Pancreas (tissue), 10 donors: ENCODE measurements at regions of chr19 and their contacts with region 1.

Region 1: DNA sequence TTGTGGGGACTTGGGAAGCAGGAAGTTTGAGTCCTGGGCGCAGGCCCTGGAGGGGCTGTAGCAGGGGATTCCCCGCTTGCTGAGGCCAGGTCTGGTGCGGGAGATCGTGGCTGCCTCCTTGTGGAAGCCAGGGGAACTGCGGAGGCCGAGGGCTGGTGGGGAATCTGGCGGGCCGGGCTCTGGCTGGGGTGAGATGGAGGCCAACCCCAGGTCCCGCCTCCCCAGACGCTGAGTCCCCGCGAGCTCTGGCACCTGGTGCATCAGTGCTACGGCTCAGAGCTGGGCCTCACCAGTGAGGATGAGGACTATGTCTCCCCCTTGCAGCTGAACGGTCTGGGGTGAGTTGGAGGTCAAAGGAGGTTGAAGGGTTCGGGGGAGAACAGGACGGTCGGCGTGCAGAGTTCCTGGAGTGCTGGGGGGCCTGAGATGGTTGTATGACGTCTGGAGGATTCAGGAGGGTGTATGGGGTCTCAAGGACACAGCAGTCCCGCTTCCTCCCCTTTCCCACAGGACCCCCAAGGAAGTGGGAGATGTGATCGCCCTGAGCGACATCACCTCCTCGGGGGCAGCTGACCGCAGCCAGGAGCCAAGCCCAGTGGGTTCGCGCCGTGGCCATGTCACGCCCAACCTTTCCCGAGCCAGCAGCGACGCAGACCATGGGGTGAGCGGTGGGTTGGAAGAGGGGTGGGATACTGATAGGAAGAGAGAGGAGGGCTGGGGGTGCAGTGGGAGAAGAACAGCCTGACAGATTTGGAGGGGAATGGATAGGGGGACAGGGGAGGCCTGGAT is 13.1 kb downstream of the GRAMD1A start:
- DNase-seq: peak; percentile 61 to 90 (median 78)
- ATAC-seq: peak; percentile 67 to 90 (median 85)
- H3K4me3 ChIP-seq: no peak overlapping the region
- H3K27ac ChIP-seq: no peak overlapping the region
- H3K4me1 ChIP-seq: peaks cover 0 to 10% (median 4%) of the 10 kb centered on the region in 3 donors
- H3K27me3 ChIP-seq: no peaks in the 10 kb centered on the region
- CTCF ChIP-seq: peak; percentile 86 to 95 (median 94)

Region 2: GRCh38 chr19:34904846-34905527 is 108.2 kb before region 1 on chr19:
- intact Hi-C with region 1: no loop called
- DNase-seq: peak in 1 of 6 donors; percentile 33
- ATAC-seq: peak in 1 of 4 donors; percentile 36
- H3K4me3 ChIP-seq: no peak overlapping the region
- H3K27ac ChIP-seq: no peak overlapping the region
- H3K4me1 ChIP-seq: no peaks in the 10 kb centered on the region
- H3K27me3 ChIP-seq: peaks cover 0 to 6% (median 0%) of the 10 kb centered on the region in 4 donors
- CTCF ChIP-seq: no peak

Region 3: DNA sequence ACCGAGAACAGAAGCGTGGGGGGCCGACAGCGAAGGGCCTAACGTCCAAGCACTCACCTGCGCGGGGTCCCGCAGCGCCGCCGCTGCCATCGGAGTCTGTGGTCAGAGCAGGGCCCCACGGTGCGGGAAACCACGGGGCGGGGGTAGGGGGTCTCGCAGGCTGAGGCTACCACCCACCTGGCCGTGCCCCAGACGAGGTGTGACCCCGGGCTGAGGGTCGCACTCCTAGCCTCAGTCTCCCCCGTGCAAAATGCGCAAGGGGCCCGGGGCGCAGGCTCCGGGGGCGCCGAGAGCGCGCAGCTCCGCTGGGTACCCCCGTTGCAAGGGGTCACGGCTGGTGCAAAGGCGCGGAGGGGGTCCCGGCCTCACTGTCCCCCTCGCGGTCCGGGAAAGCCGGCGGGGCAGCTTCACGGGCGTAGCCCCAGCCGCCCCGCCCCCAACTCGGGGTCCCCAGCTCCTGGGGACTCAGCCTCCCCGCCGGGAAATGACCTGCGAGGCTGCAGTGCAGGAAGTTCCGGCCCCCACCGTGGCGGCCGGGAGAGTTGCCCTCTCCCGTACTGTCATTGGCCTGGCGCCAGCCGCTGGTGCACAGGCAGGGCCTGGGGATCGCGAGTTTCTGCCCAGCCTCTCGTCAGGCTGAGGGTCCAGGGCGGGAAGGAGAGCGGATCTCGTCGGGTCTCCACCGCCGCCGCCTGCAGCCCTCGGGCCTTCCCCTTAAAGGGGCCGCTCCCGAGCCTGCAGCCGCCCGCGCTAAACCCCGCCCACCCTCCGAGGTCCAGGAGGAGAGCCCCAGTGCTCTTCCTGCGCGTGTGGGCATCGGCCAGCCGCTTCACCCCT is 49.4 kb before region 1 on chr19 and contains the start of gene ZNF792:
- intact Hi-C with region 1: loop called in 1 of 3 experiments (anchors 10 kb)
- DNase-seq: peak; percentile 51 to 88 (median 72)
- ATAC-seq: peak; percentile 83 to 91 (median 90)
- H3K4me3 ChIP-seq: peak within 1 kb of the TSS; percentile 96 to 98 (median 97)
- H3K27ac ChIP-seq: peak within 1 kb of the TSS; percentile 10 to 56 (median 52)
- H3K4me1 ChIP-seq: peaks cover 0 to 10% (median 5%) of the 10 kb centered on the region in 3 donors
- H3K27me3 ChIP-seq: no peaks in the 10 kb centered on the region
- CTCF ChIP-seq: no peak
- total RNA-seq, gene ZNF792: 1.5 to 6.4 (median 2.6) TPM

Region 4: GRCh38 chr19:34974646-34975045 is 38.6 kb before region 1 on chr19:
- intact Hi-C with region 1: loop called (anchors 2 to 10 kb)
- DNase-seq: no peak
- ATAC-seq: no peak
- H3K4me3 ChIP-seq: no peak overlapping the region
- H3K27ac ChIP-seq: no peak overlapping the region
- H3K4me1 ChIP-seq: peaks cover 0 to 7% (median 0%) of the 10 kb centered on the region in 3 donors
- H3K27me3 ChIP-seq: no peaks in the 10 kb centered on the region
- CTCF ChIP-seq: no peak